K562 (cell line): ENCODE measurements at regions of chr6 and their contacts with region 1.

Region 1: DNA sequence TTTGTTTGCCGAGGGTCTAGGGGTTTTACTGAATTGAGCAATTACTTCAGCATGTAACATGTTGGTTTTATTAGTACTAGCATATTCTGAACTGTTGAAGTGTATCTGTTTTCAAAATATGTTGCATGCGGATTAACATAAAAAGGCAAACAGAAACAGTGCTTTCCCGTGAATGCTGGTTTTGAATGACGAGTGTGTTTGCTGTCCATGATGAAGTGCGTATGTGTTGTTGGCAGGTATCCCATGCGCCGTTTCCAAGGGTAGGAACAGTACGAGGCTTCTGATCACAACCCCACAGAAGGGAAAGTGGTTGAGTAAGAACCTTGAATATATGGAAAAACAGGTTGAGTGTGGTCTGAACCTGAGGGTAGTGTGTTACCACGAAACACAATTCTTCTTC is 232.9 kb downstream of the SAMD5 start:
- DNase-seq: no peak
- ATAC-seq: no peak
- H3K4me3 ChIP-seq: no peak overlapping the region
- H3K27ac ChIP-seq: no peak overlapping the region
- H3K4me1 ChIP-seq: no peaks in the 10 kb centered on the region
- H3K27me3 ChIP-seq: no peaks in the 10 kb centered on the region
- CTCF ChIP-seq: no peak
- EP300 ChIP-seq: no peak
- POLR2A ChIP-seq: no peak
- RAD21 ChIP-seq: no peak

Region 2: GRCh38 chr6:147675281-147675680 is 66.1 kb before region 1 on chr6:
- CTCF ChIA-PET with region 1: no interaction called
- POLR2A ChIA-PET with region 1: no interaction called
- in situ Hi-C with region 1: no loop called
- intact Hi-C with region 1: no loop called
- DNase-seq: no peak
- ATAC-seq: no peak
- H3K4me3 ChIP-seq: no peak overlapping the region
- H3K27ac ChIP-seq: no peak overlapping the region
- H3K4me1 ChIP-seq: no peaks in the 10 kb centered on the region
- H3K27me3 ChIP-seq: no peaks in the 10 kb centered on the region
- CTCF ChIP-seq: no peak
- EP300 ChIP-seq: no peak
- POLR2A ChIP-seq: no peak
- RAD21 ChIP-seq: no peak

Region 3: DNA sequence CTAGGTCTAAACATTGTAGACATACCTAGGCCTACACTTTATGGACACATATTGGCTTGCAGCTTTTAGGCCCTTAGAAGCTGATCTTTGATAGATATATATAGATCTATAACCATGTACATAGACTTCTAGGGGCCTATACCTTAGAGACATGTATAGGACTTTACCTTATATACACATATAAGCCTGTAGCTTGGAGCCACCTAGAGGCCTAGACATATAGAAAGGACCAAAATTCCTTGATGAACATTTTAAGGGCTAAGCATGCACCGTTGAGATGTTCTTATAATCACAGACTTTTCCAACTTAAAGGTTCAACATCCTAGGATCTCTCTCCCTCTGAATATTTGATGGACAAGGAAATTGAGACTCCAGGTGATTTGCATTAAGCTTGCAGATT is 229.6 kb after region 1 on chr6:
- CTCF ChIA-PET with region 1: no interaction called
- POLR2A ChIA-PET with region 1: no interaction called
- in situ Hi-C with region 1: no loop called
- intact Hi-C with region 1: loop called (anchors 10 kb)
- DNase-seq: peak in 1 of 4 experiments; percentile 26
- ATAC-seq: peak; percentile 77
- H3K4me3 ChIP-seq: no peak overlapping the region
- H3K27ac ChIP-seq: no peak overlapping the region
- H3K4me1 ChIP-seq: no peaks in the 10 kb centered on the region
- H3K27me3 ChIP-seq: no peaks in the 10 kb centered on the region
- CTCF ChIP-seq: peak; percentile 26 to 57 (median 29); a peak in 3 of 6 replicates
- EP300 ChIP-seq: no peak
- POLR2A ChIP-seq: no peak
- RAD21 ChIP-seq: peak; percentile 39 to 67